CD8-positive, alpha-beta T cell (primary cell): ENCODE measurements at regions of chr9 and their contacts with region 1.

Region 1: GRCh38 chr9:115593587-115594091 is 475.7 kb upstream of the TNC start:
- DNase-seq: peak in 2 of 9 experiments; percentile 12 to 15
- ATAC-seq: no peak
- H3K4me3 ChIP-seq: no peak overlapping the region
- H3K4me3 Mint-ChIP-seq: no peak overlapping the region
- H3K27ac ChIP-seq: no peak overlapping the region
- H3K27ac Mint-ChIP-seq: no peak overlapping the region
- H3K4me1 ChIP-seq: no peaks in the 10 kb centered on the region
- H3K4me1 Mint-ChIP-seq: no peaks in the 10 kb centered on the region
- H3K27me3 ChIP-seq: no peaks in the 10 kb centered on the region
- H3K27me3 Mint-ChIP-seq: peaks cover 16% of the 10 kb centered on the region
- CTCF ChIP-seq: peak; percentile 24

Region 2: DNA sequence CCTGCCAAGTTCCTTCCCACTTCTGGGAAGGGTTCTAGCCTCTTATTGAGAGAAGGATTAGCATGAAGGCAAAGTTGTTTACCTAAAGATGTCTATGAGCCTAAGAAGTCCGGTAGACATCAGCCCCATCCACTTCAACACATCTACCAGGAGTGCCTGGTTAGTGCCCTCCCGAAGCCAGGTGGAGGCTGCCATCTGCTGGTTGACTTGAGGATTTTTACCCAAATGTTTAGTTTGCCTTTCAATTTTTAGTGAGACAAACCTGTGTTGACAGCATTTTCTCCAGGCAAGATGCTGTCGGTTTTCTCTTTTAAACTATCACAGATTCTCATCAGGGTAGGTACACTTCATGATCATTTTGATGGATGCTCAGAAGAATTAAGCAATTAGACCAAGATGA is 579.6 kb before region 1 on chr9:
- CTCF ChIA-PET with region 1: no interaction called
- POLR2A ChIA-PET with region 1: no interaction called
- intact Hi-C with region 1: no loop called
- DNase-seq: peak; percentile 60 to 86 (median 79)
- ATAC-seq: peak; percentile 79
- H3K4me3 ChIP-seq: no peak overlapping the region
- H3K4me3 Mint-ChIP-seq: no peak overlapping the region
- H3K27ac ChIP-seq: no peak overlapping the region
- H3K27ac Mint-ChIP-seq: no peak overlapping the region
- H3K4me1 ChIP-seq: peaks cover 7% of the 10 kb centered on the region
- H3K4me1 Mint-ChIP-seq: peaks cover 9% of the 10 kb centered on the region
- H3K27me3 ChIP-seq: no peaks in the 10 kb centered on the region
- H3K27me3 Mint-ChIP-seq: no peaks in the 10 kb centered on the region
- CTCF ChIP-seq: peak; percentile 89

Region 3: GRCh38 chr9:115808108-115808507 is 214.5 kb after region 1 on chr9:
- CTCF ChIA-PET with region 1: no interaction called
- POLR2A ChIA-PET with region 1: no interaction called
- intact Hi-C with region 1: no loop called
- DNase-seq: no peak
- ATAC-seq: no peak
- H3K4me3 ChIP-seq: no peak overlapping the region
- H3K4me3 Mint-ChIP-seq: no peak overlapping the region
- H3K27ac ChIP-seq: no peak overlapping the region
- H3K27ac Mint-ChIP-seq: no peak overlapping the region
- H3K4me1 ChIP-seq: no peaks in the 10 kb centered on the region
- H3K4me1 Mint-ChIP-seq: no peaks in the 10 kb centered on the region
- H3K27me3 ChIP-seq: no peaks in the 10 kb centered on the region
- H3K27me3 Mint-ChIP-seq: no peaks in the 10 kb centered on the region
- CTCF ChIP-seq: no peak

Region 4: DNA sequence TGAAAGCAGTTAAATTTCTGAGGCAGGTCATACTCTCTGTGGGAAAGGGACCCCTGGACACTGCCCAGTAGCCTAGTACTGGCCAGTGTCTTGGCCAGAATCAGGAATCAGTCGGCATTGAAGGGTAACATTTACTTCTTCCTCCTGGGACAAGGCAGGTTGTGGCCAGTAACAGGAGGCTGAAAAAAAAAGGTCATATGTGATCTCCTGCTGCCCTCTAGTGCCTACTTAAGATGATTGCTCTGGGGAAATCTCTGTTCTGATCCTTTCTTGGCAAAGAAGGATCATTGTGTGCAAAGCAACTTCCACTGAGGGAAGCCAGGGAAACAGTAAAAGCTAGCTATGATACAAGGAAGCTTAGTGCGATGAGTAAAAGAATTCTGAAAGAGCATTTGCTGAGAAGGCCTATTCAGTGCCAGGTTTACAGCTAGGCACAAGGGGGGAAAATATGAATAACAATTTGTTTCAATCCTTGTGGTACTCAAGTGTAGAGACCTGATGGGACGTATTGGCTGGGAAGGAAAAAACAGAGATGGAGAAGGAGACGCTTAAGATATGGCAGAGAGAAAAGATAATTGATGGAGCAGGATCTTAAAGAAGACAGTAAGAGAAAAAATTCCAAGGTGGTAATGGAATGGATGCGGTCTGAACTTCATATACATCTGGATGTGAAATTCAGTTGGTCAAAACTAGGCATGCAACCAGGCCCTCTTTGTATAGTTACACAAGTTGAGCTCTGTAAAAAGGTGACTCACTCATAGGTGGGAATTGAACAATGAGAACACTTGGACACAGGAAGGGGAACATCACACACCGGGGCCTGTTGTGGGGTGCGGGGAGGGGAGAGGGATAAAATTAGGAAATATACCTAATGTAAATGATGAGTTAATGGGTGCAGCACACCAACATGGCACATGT is 1067.7 kb after region 1 on chr9:
- CTCF ChIA-PET with region 1: interaction called, 4 read pairs
- POLR2A ChIA-PET with region 1: no interaction called
- intact Hi-C with region 1: loop called in 1 of 2 experiments (anchors 2 kb)
- DNase-seq: peak in 2 of 9 experiments; percentile 51 to 58
- ATAC-seq: no peak
- H3K4me3 ChIP-seq: no peak overlapping the region
- H3K4me3 Mint-ChIP-seq: no peak overlapping the region
- H3K27ac ChIP-seq: no peak overlapping the region
- H3K27ac Mint-ChIP-seq: no peak overlapping the region
- H3K4me1 ChIP-seq: no peaks in the 10 kb centered on the region
- H3K4me1 Mint-ChIP-seq: no peaks in the 10 kb centered on the region
- H3K27me3 ChIP-seq: no peaks in the 10 kb centered on the region
- H3K27me3 Mint-ChIP-seq: no peaks in the 10 kb centered on the region
- CTCF ChIP-seq: peak; percentile 63